ENCODE measurements at regions of chr2 and their contacts with region 1.

Region 1: GRCh38 chr2:44087036-44087713 is 81.5 kb upstream of the PPM1B start:
- DNase-seq: peak; percentile 96
- H3K4me3 Mint-ChIP-seq: peak overlapping the region; percentile 72
- H3K27ac Mint-ChIP-seq: peak overlapping the region; percentile 83
- H3K4me1 Mint-ChIP-seq: peaks cover 20% of the 10 kb centered on the region
- H3K27me3 Mint-ChIP-seq: no peaks in the 10 kb centered on the region

Region 2: DNA sequence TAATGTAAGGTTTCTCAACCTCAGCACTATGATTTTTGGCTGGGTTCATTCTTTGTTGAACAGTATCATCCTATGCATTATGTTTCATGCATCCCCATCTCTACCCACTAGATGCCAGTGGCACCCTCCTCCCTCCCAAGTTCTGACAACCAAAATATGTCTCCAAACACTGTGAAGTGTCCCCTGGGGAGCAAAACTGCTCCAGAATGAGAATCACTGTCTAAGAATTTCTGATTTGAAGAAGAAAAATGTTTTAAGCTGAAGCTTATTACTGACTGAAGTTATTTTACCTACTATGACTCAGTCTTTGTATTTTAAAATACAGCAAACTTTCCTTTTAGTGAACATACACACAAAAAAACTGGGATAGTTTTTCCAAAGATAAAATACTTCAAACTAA is 494.7 kb before region 1 on chr2:
- intact Hi-C with region 1: no loop called
- DNase-seq: no peak
- H3K4me3 Mint-ChIP-seq: no peak overlapping the region
- H3K27ac Mint-ChIP-seq: no peak overlapping the region
- H3K4me1 Mint-ChIP-seq: peaks cover 24% of the 10 kb centered on the region
- H3K27me3 Mint-ChIP-seq: no peaks in the 10 kb centered on the region

Region 3: GRCh38 chr2:43995733-43996533 is 91.2 kb before region 1 on chr2 and contains the start of gene LRPPRC:
- intact Hi-C with region 1: no loop called
- DNase-seq: peak; percentile 96
- H3K4me3 Mint-ChIP-seq: peak within 1 kb of the TSS; percentile 96
- H3K27ac Mint-ChIP-seq: peak within 1 kb of the TSS; percentile 95
- H3K4me1 Mint-ChIP-seq: peaks cover 32% of the 10 kb centered on the region
- H3K27me3 Mint-ChIP-seq: peaks cover 5% of the 10 kb centered on the region
- total RNA-seq, gene LRPPRC: 173 and 179 TPM in 2 replicates

Region 4: GRCh38 chr2:44044281-44044720 is 42.9 kb before region 1 on chr2:
- intact Hi-C with region 1: loop called (anchors 1 kb)
- DNase-seq: peak; percentile 94
- H3K4me3 Mint-ChIP-seq: no peak overlapping the region
- H3K27ac Mint-ChIP-seq: no peak overlapping the region
- H3K4me1 Mint-ChIP-seq: no peaks in the 10 kb centered on the region
- H3K27me3 Mint-ChIP-seq: peaks cover 9% of the 10 kb centered on the region

Region 5: GRCh38 chr2:44244129-44244871 is 157.1 kb after region 1 on chr2:
- intact Hi-C with region 1: loop called (anchors 2 kb)
- DNase-seq: peak; percentile 83
- H3K4me3 Mint-ChIP-seq: peak overlapping the region; percentile 65
- H3K27ac Mint-ChIP-seq: no peak overlapping the region
- H3K4me1 Mint-ChIP-seq: peaks cover 7% of the 10 kb centered on the region
- H3K27me3 Mint-ChIP-seq: peaks cover 5% of the 10 kb centered on the region

Region 6: GRCh38 chr2:44342854-44343253 is 255.7 kb after region 1 on chr2:
- intact Hi-C with region 1: loop called (anchors 2 kb)
- DNase-seq: no peak
- H3K4me3 Mint-ChIP-seq: no peak overlapping the region
- H3K27ac Mint-ChIP-seq: no peak overlapping the region
- H3K4me1 Mint-ChIP-seq: no peaks in the 10 kb centered on the region
- H3K27me3 Mint-ChIP-seq: no peaks in the 10 kb centered on the region

Region 7: GRCh38 chr2:44361330-44362206 is 274.4 kb after region 1 on chr2 and contains the starts of genes CAMKMT and PREPL:
- intact Hi-C with region 1: loop called (anchors 1 kb)
- DNase-seq: peak; percentile 99
- H3K4me3 Mint-ChIP-seq: peak within 1 kb of the TSS; percentile 89
- H3K27ac Mint-ChIP-seq: peak within 1 kb of the TSS; percentile 100
- H3K4me1 Mint-ChIP-seq: peaks cover 31% of the 10 kb centered on the region
- H3K27me3 Mint-ChIP-seq: peaks cover 2% of the 10 kb centered on the region
- total RNA-seq, gene CAMKMT: 13.1 and 16.2 TPM in 2 replicates
- total RNA-seq, gene PREPL: 32.7 and 33.3 TPM in 2 replicates

Region 8: DNA sequence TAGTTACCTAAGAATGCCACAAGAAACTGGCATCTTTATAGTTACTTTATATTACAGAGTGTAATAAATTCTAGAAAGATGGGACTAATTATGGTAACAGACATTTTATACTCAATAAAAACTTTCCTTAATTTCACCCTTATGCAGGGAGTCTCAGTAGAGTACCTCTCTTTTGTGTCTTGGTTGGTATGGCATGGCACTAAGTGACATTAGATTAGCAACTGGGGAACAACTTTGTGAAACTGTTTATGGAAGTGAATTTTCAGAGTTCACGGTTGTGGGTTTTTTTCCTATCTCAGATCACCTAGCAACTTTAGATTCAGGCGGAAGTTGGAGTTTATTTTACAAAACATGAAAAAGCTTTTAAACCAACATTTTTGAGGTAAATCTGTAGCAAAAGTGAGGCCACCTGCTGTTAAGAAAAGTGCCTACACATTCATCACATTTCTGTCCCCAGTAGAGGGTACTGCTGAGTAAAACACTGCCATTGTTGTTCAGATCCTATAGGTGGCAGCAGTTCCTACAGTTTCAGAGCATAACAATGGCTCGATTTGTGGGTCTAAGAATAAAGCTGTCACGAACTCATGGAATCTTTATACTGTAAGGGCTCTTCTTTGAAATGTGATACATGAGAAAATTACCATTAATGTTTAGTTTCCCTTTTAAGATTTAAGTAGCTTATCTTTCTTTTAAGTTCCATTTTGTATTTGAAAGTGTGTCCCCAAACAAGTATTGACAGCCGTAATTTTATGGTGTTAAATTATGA is 392.1 kb after region 1 on chr2:
- intact Hi-C with region 1: loop called (anchors 1 kb)
- DNase-seq: peak; percentile 86
- H3K4me3 Mint-ChIP-seq: no peak overlapping the region
- H3K27ac Mint-ChIP-seq: no peak overlapping the region
- H3K4me1 Mint-ChIP-seq: peaks cover 3% of the 10 kb centered on the region
- H3K27me3 Mint-ChIP-seq: no peaks in the 10 kb centered on the region

Measured in activated CD4-positive, alpha-beta T cell treated with anti-CD3 and anti-CD28 coated beads, Interleukin-2, amount 10 ng/mL, durations not matched to agents 24 days and 14 days (primary cell).